Dendritic cell treated with granulocyte-macrophage colony-stimulating factor and Interleukin-4, amounts not matched to agents 40 ng/mL and 50 ng/mL, for 4 days (primary cell): ENCODE measurements at regions of chr12 and their contacts with region 1.

Region 1: DNA sequence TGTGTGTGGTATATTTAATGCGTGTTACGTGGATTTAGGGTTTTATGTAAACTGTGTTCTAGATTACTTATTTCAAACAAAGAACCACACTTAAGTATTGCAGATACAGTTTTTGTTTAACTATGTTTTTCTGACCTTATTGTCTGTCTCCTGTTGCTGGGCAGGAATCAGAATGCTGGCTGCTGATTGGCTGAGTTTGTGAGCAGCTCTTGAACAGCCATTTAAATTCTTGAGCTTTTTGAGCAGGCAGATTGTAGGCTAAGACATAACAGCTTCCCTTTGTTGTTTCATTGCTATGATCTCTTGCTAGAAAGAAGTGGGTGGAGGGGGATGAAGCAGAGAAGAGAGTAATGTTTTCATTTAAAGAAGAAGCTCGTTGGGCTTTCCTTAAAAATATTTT is 52.2 kb downstream of the ATF7IP start:
- H3K4me3 Mint-ChIP-seq: no peak overlapping the region
- H3K27ac Mint-ChIP-seq: no peak overlapping the region
- H3K4me1 Mint-ChIP-seq: peaks cover 8% of the 10 kb centered on the region
- H3K27me3 Mint-ChIP-seq: no peaks in the 10 kb centered on the region

Region 2: GRCh38 chr12:14365294-14366208 is 52.2 kb before region 1 on chr12 and contains the start of gene ATF7IP:
- intact Hi-C with region 1: loop called (anchors 5 kb)
- H3K4me3 Mint-ChIP-seq: peak within 1 kb of the TSS; percentile 74
- H3K27ac Mint-ChIP-seq: peak within 1 kb of the TSS; percentile 84
- H3K4me1 Mint-ChIP-seq: peaks cover 6% of the 10 kb centered on the region
- H3K27me3 Mint-ChIP-seq: no peaks in the 10 kb centered on the region